GM23248 (cell line): ENCODE measurements at regions of chr17 and their contacts with region 1.

Region 1: GRCh38 chr17:27733773-27734172 is 66.6 kb downstream of the NOS2 start:
- DNase-seq: peak; percentile 2
- H3K4me3 ChIP-seq: no peak overlapping the region
- H3K27ac ChIP-seq: no peak overlapping the region
- H3K4me1 ChIP-seq: no peaks in the 10 kb centered on the region
- H3K27me3 ChIP-seq: peaks cover 2% of the 10 kb centered on the region; the same call in 1 of the 2 replicates

Region 2: DNA sequence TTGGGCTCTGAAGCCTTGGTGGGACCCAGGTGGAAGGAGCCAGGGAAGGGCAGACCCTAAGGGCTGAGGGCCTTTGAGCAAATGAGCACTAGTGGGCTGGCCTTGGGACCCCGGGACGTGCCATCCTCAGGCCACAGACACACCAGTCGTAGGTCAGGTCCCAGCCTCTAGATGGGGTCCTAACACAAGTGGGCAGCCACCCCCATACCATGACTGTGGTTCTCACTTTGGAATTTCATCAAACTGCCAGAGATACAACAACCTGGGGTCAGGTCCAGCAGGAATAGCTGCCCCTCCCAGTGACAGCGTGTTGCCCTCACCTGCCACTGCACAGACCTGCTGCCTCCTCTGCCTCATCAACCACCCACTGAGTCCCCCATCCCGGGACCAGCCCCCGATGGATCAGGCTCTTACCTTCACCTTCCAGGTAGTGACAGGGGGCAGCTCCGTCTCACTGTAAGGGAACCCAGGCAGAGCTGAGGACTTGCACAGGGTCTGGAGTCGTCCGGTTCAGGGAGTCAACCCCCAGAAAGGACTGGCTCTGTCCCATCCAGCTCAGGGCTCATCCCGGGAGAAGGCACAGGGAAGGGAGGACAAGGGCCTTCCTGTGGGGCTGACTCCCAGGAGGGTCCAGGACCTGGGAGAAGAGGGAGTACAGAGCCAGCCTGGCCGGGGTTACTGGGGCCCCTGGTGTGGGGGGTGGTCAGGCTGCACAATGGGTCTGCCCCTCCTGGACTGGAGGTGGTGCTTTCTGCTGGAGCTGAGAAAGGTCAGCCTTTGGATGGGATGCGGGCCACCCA is 62.8 kb before region 1 on chr17:
- in situ Hi-C with region 1: loop called (anchors 10 kb)
- DNase-seq: no peak
- H3K4me3 ChIP-seq: no peak overlapping the region
- H3K27ac ChIP-seq: no peak overlapping the region
- H3K4me1 ChIP-seq: no peaks in the 10 kb centered on the region
- H3K27me3 ChIP-seq: no peaks in the 10 kb centered on the region

Region 3: GRCh38 chr17:28193241-28193640 is 459.5 kb after region 1 on chr17:
- in situ Hi-C with region 1: no loop called
- DNase-seq: no peak
- H3K4me3 ChIP-seq: no peak overlapping the region
- H3K27ac ChIP-seq: no peak overlapping the region
- H3K4me1 ChIP-seq: no peaks in the 10 kb centered on the region
- H3K27me3 ChIP-seq: no peaks in the 10 kb centered on the region